ENCODE measurements at regions of chr20 and their contacts with region 1.

Region 1: GRCh38 chr20:13221673-13222318 is 722 bp downstream of the ISM1 start:
- DNase-seq: peak; percentile 69
- H3K4me3 Mint-ChIP-seq: peak overlapping the region; percentile 78
- H3K27ac Mint-ChIP-seq: no peak overlapping the region
- H3K4me1 Mint-ChIP-seq: peaks cover 6% of the 10 kb centered on the region
- H3K27me3 Mint-ChIP-seq: no peaks in the 10 kb centered on the region
- CTCF ChIP-seq: no peak

Region 2: DNA sequence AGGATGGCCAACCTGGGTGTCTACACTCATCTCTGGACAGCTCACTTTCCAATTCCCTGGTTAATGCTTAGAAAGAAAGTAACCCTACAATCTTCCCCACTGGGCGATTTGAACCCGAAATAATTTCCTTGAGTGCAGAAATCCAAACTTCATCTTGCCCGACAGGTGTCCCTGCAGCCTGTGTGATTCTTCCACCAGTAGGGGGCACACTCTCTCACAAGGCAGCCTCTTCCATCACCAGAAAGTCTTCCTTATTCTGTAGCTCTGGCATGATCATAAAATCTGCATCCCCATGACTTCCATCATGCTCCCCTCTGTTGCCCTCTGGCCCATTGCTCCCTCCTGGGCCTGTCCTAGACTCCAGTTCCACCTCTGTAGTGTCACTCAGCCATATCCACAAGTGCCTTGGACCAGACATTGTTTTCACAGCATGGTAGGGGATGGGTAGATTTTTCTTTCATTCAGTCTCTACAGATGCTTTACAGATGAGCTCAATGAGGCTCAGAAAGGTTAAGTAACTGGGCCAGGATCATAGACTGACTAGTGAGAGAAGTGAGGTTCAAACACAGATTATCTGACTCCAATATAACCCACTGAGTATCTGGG is 383.4 kb before region 1 on chr20:
- CTCF ChIA-PET with region 1: no interaction called
- POLR2A ChIA-PET with region 1: no interaction called
- intact Hi-C with region 1: no loop called
- DNase-seq: peak; percentile 8
- H3K4me3 Mint-ChIP-seq: no peak overlapping the region
- H3K27ac Mint-ChIP-seq: no peak overlapping the region
- H3K4me1 Mint-ChIP-seq: no peaks in the 10 kb centered on the region
- H3K27me3 Mint-ChIP-seq: peaks cover 28% of the 10 kb centered on the region
- CTCF ChIP-seq: peak; percentile 32

Region 3: DNA sequence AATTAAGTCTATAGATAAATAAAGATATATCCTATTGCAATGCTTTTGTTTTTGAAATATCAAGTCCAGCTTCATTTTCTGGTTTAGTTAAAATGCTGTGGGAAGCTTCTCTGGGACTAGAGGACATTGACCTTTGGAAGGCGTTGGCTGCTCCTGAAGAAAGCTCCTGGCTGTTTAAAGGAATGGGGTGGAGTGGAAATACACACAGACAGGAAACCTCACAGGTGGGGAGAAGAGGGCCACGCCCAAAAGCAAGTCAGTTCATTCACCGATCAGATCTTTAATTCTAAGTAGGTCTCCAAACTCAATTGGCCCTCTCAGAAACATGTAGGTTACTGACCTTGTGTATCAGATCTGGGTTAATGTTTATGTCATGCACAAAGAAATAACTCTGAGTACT is 153.4 kb before region 1 on chr20:
- CTCF ChIA-PET with region 1: no interaction called
- POLR2A ChIA-PET with region 1: no interaction called
- intact Hi-C with region 1: no loop called
- DNase-seq: no peak
- H3K4me3 Mint-ChIP-seq: no peak overlapping the region
- H3K27ac Mint-ChIP-seq: no peak overlapping the region
- H3K4me1 Mint-ChIP-seq: peaks cover 9% of the 10 kb centered on the region
- H3K27me3 Mint-ChIP-seq: no peaks in the 10 kb centered on the region
- CTCF ChIP-seq: no peak

Region 4: DNA sequence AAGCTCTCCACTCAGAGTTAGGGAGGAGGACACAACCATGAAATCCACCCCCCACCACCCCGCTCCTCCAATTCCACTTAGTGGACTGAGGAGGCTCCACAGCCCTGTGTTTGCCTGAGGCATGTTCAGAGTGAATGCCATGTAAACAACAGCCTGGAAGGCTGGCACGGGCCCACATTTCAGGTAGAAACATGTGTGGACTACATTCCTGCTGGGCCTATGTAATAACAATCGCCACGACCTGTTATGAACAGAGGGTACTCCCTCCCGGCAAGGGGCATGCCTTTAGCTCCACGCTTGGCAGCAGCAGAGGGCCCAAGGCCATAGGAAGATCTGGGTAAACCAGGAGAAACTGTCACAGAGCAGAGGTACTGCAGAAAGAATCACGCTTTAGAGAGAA is 64.8 kb after region 1 on chr20:
- CTCF ChIA-PET with region 1: interaction called, 4 read pairs
- POLR2A ChIA-PET with region 1: interaction called, 12 read pairs
- intact Hi-C with region 1: no loop called
- DNase-seq: peak; percentile 91
- H3K4me3 Mint-ChIP-seq: peak overlapping the region; percentile 33
- H3K27ac Mint-ChIP-seq: peak overlapping the region; percentile 98
- H3K4me1 Mint-ChIP-seq: peaks cover 28% of the 10 kb centered on the region
- H3K27me3 Mint-ChIP-seq: no peaks in the 10 kb centered on the region
- CTCF ChIP-seq: no peak

Measured in MCF 10A (cell line).